AG04449 (cell line): ENCODE measurements at regions of chr6 and their contacts with region 1.

Region 1: DNA sequence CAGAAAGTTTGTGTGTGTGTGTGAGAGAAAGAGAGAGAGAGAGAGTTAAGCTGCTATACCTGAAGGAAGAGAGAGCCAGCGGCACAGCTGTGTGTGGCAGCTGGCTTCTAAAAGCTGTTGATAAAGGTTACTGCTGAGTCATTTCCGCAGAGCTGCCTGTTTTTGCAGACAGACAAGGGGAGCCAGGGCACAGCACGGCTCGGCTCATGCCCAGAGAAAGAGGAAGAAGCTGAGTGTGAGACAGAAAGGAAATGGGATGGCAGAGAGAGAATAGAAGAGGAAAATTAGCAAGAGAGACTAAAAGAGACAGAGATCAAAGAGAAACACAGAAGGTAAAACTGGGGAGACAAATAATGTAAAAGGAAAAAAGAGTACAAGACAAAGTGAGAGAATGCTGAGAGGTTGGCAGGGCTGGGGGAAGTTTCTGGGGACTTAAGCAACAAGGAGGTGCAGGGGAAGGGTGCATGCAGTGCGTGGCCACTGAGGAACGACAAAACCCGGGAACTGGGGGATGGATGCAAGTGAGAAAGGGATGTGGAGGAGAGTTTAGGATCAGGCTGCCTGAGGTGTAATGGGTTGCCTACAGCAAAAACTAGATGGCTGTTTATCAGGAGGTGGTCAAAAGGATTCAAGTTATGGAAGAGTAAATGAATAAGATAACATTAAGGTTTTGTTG is 22.7 kb downstream of the HLA-A start:
- DNase-seq: peak; percentile 56
- H3K4me3 ChIP-seq: peak overlapping the region; percentile 42
- CTCF ChIP-seq: no peak

Region 2: GRCh38 chr6:29953001-29953441 is 12.0 kb before region 1 on chr6:
- CTCF ChIA-PET with region 1: interaction called, 9 read pairs
- POLR2A ChIA-PET with region 1: interaction called, 12 read pairs
- DNase-seq: peak; percentile 55
- H3K4me3 ChIP-seq: no peak overlapping the region
- CTCF ChIP-seq: no peak